ENCODE measurements at regions of chr17 and their contacts with region 1.

Region 1: GRCh38 chr17:70622368-70623260 is 453.3 kb downstream of the KCNJ2 start:
- DNase-seq: peak; percentile 38
- ATAC-seq: peak; percentile 86
- H3K4me3 ChIP-seq: no peak overlapping the region
- H3K27ac ChIP-seq: no peak overlapping the region
- H3K4me1 ChIP-seq: no peaks in the 10 kb centered on the region
- H3K27me3 ChIP-seq: no peaks in the 10 kb centered on the region
- CTCF ChIP-seq: peak; percentile 53 to 83 (median 80); a peak in 5 of 6 replicates
- POLR2A ChIP-seq: no peak
- RAD21 ChIP-seq: peak; percentile 73

Region 2: DNA sequence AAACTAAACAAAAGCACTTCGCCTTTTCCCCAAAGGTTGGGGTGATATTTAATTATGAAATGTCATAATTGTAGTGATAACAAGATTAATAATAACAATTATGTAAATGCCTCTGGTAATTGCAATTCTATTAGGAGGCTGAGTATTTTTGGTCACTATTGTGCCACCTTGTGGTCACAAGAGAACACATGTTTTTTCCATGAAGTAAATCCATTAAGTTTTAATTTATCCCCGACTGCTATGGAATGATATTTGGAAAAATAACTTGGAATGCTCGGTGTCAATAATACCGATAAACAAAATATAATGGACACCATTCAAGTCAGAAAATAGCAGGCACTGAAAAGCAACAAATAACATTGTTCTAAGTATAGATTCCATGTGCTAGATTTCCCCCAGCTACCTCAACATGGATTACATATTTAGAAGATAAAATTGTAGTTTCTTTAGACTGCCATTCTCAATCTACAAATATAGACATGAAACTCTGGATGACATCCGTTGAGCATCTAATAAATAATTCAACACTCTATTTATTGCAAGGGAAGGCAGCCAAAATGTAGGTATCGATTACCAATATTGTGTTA is 478.3 kb before region 1 on chr17:
- CTCF ChIA-PET with region 1: no interaction called
- POLR2A ChIA-PET with region 1: no interaction called
- RAD21 ChIA-PET with region 1: no interaction called
- intact Hi-C with region 1: loop called (anchors 5 kb)
- DNase-seq: peak; percentile 12
- ATAC-seq: 0 out of 2 replicates have a peak, but pooled peaks have one; percentile 46
- H3K4me3 ChIP-seq: no peak overlapping the region
- H3K27ac ChIP-seq: no peak overlapping the region
- H3K4me1 ChIP-seq: no peaks in the 10 kb centered on the region
- H3K27me3 ChIP-seq: no peaks in the 10 kb centered on the region
- CTCF ChIP-seq: peak; percentile 34 to 71 (median 48); a peak in 4 of 6 replicates
- POLR2A ChIP-seq: no peak
- RAD21 ChIP-seq: peak; percentile 52

Region 3: DNA sequence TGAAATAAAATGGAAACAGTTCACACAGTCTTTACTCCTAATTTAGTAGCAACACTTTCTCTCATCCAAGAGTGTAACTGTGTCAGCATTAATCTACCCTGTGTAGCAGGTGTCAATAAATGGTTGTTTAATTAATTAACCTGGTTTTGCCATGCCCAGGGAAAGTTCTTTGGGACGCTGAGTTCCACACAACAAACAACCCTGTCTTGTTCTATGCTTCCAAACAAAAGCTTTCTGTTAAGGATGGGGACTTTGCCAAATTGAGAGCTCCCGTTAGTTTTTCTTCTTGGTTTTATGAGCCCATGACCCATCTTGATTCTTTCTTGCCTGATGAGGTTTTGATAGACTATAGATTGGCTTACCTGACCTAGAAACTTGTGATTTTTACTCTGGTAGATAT is 76.8 kb after region 1 on chr17:
- CTCF ChIA-PET with region 1: no interaction called
- POLR2A ChIA-PET with region 1: no interaction called
- RAD21 ChIA-PET with region 1: no interaction called
- intact Hi-C with region 1: no loop called
- DNase-seq: no peak
- ATAC-seq: no peak
- H3K4me3 ChIP-seq: no peak overlapping the region
- H3K27ac ChIP-seq: no peak overlapping the region
- H3K4me1 ChIP-seq: no peaks in the 10 kb centered on the region
- H3K27me3 ChIP-seq: no peaks in the 10 kb centered on the region
- CTCF ChIP-seq: no peak
- POLR2A ChIP-seq: no peak
- RAD21 ChIP-seq: no peak

Measured in HCT116 (cell line).